Lower leg skin (tissue), 4 donors: ENCODE measurements at regions of chr2 and their contacts with region 1.

Region 1: GRCh38 chr2:31049916-31050588 is 88.2 kb downstream of the GALNT14 start:
- DNase-seq: peak in 1 of 2 donors; percentile 39
- H3K4me3 ChIP-seq: no peak overlapping the region
- CTCF ChIP-seq: no peak
- POLR2A ChIP-seq: no peak

Region 2: DNA sequence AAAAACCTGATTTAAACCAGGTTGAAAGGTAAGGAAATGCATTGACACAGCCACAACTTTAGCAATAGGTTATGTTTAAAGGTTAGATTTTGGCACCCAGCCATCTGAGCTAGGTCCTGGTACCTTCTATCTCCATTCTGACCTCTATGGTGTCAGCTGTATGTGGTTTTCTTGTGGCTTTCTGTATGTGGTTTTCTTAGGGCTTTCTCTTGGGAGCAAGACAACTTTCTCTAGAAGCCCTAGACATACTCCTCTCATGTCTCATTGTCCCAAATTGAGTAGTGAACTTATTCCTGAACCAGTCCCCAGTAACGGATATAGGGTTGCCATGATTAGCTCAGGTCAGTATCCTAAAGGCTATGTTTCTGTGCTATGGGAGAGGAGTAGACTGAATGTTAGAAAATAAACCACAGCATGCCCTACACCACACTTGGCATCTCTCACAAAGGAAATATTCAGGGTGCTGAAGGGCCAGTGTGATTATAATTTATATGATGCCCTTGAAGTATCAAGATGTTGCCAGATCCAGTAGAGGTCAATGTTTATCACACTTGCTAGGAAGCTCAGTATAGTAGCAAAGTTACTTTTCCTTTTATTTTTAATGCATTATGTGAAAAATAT is 418.9 kb before region 1 on chr2:
- intact Hi-C with region 1: no loop called
- DNase-seq: no peak
- H3K4me3 ChIP-seq: no peak overlapping the region
- CTCF ChIP-seq: no peak
- POLR2A ChIP-seq: no peak

Region 3: DNA sequence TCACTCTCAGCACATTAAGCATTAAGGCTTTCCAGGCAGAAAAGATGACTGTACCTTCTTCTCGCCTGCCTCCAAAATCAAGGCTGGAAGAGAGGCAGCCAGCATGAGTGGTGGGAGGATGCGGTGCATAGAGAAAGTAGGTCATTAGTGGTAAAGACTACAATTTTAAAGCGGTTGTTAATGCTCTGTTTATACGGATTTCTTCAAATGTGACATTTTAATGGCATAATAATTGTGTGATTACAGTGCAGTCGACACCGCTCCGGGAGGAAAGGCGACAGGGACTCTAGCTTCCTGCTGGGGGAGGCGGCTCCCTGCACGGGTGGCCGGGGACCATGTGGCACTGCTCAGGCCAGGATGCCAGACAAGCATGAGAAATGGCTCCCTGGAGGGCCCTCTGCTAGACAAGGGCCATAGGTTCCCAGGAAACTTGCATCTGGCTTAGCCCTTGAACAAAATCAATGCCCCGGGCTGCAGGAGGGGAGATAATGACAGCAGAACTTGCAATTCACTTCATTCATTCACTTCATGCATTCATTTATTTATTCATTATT is 41.4 kb before region 1 on chr2:
- intact Hi-C with region 1: loop called (anchors 1 kb)
- DNase-seq: no peak
- H3K4me3 ChIP-seq: no peak overlapping the region
- CTCF ChIP-seq: no peak
- POLR2A ChIP-seq: no peak